A673 (cell line): ENCODE measurements at regions of chr10 and their contacts with region 1.

Region 1: GRCh38 chr10:119686439-119687191 is 35.4 kb downstream of the BAG3 start:
- DNase-seq: peak; percentile 88
- H3K4me3 ChIP-seq: peak overlapping the region; percentile 10
- H3K27ac ChIP-seq: no peak overlapping the region
- H3K4me1 ChIP-seq: peaks cover 22% of the 10 kb centered on the region
- H3K27me3 ChIP-seq: no peaks in the 10 kb centered on the region
- CTCF ChIP-seq: peak; percentile 92

Region 2: GRCh38 chr10:119299531-119299930 is 387.1 kb before region 1 on chr10:
- CTCF ChIA-PET with region 1: no interaction called
- POLR2A ChIA-PET with region 1: no interaction called
- intact Hi-C with region 1: no loop called
- DNase-seq: no peak
- H3K4me3 ChIP-seq: no peak overlapping the region
- H3K27ac ChIP-seq: no peak overlapping the region
- H3K4me1 ChIP-seq: peaks cover 7% of the 10 kb centered on the region
- H3K27me3 ChIP-seq: no peaks in the 10 kb centered on the region
- CTCF ChIP-seq: 0 out of 2 replicates have a peak, but pooled peaks have one; percentile 13

Region 3: GRCh38 chr10:119859420-119860258 is 173.0 kb after region 1 on chr10:
- CTCF ChIA-PET with region 1: no interaction called
- POLR2A ChIA-PET with region 1: no interaction called
- intact Hi-C with region 1: loop called (anchors 1 kb)
- DNase-seq: peak; percentile 53
- H3K4me3 ChIP-seq: no peak overlapping the region
- H3K27ac ChIP-seq: no peak overlapping the region
- H3K4me1 ChIP-seq: peaks cover 11% of the 10 kb centered on the region
- H3K27me3 ChIP-seq: no peaks in the 10 kb centered on the region
- CTCF ChIP-seq: peak; percentile 72

Region 4: DNA sequence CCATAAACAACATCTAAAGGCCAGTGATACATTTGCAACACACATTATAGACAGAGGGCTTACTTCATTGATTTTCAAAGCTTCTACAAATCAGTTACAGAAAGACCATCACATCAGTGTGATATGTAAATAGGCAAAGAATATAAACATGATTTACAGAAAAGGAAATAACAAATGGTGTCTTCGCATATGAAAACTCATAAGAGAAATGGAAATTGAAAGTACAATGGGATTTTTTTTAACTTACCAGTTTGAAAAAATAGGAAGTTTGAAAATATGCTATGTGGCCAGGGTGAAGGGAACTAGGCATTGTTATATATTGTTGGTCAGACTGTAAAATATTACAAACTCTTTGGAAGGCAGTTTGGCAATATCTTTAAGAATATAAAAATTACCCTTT is 233.2 kb after region 1 on chr10:
- CTCF ChIA-PET with region 1: no interaction called
- POLR2A ChIA-PET with region 1: no interaction called
- intact Hi-C with region 1: loop called (anchors 5 kb)
- DNase-seq: no peak
- H3K4me3 ChIP-seq: no peak overlapping the region
- H3K27ac ChIP-seq: no peak overlapping the region
- H3K4me1 ChIP-seq: no peaks in the 10 kb centered on the region
- H3K27me3 ChIP-seq: no peaks in the 10 kb centered on the region
- CTCF ChIP-seq: no peak

Region 5: GRCh38 chr10:120336911-120337540 is 650.4 kb after region 1 on chr10:
- CTCF ChIA-PET with region 1: no interaction called
- POLR2A ChIA-PET with region 1: no interaction called
- intact Hi-C with region 1: loop called (anchors 1 kb)
- DNase-seq: peak; percentile 70
- H3K4me3 ChIP-seq: no peak overlapping the region
- H3K27ac ChIP-seq: no peak overlapping the region
- H3K4me1 ChIP-seq: no peaks in the 10 kb centered on the region
- H3K27me3 ChIP-seq: peaks cover 70% of the 10 kb centered on the region
- CTCF ChIP-seq: peak; percentile 83